ENCODE measurements at regions of chr10 and their contacts with region 1.

Region 1: DNA sequence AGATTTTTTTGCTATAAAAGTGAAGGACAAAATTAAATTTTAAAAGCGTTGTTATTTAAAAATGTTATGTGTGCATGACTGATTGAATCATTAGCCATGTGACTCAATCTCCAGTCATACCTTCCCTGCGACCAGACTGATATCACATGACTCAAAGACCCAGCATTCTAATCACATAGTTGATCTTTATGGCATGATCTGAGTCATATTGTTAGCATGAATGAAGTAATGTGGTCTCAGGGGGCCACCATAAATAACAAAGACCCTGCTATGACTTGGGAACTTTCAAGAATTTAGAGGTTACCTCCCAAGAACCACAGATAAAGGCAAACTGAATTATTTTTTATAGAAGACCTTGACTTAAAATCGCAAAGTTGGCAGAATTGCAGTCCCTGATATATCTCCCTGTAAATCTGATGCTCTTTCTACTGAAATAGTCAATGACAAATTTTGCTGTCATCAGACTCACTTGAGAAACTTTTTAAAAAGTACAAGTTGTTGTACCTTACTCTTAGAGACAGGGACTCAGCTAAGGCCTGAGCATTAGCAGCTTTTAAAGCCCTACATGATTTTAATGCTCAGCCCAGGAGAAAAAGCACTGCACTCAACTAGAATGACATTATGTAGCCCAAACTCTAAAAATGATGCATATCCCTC is 717.3 kb downstream of the XPNPEP1 start:
- DNase-seq: peak; percentile 93
- ATAC-seq: peak; percentile 81
- H3K4me3 ChIP-seq: no peak overlapping the region
- H3K27ac ChIP-seq: no peak overlapping the region
- H3K4me1 ChIP-seq: peaks cover 2% of the 10 kb centered on the region; the same call in 1 of the 2 replicates
- H3K27me3 ChIP-seq: no peaks in the 10 kb centered on the region
- CTCF ChIP-seq: no peak
- POLR2A ChIP-seq: no peak
- RAD21 ChIP-seq: no peak

Region 2: DNA sequence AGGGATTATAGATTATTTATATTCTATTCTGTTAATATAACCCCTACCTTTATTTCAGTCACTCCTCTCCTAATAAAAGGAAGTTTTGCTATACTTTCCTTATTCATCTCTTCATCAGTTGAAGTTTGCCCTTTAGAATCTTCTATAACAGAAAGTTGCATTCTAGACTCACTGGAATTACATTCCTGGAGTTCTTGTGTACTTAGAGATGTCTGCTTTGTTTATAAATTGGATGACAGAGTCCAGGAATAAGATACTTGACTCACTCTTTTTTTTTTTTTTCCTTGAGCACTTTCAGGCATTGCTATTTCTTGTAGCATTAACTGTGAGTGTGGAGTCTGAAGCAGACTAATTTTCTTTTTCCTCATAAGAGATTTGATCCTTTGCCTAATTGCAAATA is 76.5 kb after region 1 on chr10:
- CTCF ChIA-PET with region 1: no interaction called
- POLR2A ChIA-PET with region 1: no interaction called
- dilution Hi-C with region 1: no loop called
- in situ Hi-C with region 1: no loop called
- intact Hi-C with region 1: loop called (anchors 5 kb)
- DNase-seq: peak; percentile 89
- ATAC-seq: peak; percentile 92
- H3K4me3 ChIP-seq: no peak overlapping the region
- H3K27ac ChIP-seq: no peak overlapping the region
- H3K4me1 ChIP-seq: peaks cover 8% of the 10 kb centered on the region
- H3K27me3 ChIP-seq: no peaks in the 10 kb centered on the region
- CTCF ChIP-seq: no peak
- POLR2A ChIP-seq: no peak
- RAD21 ChIP-seq: no peak